ENCODE measurements at regions of chr17 and their contacts with region 1.

Region 1: DNA sequence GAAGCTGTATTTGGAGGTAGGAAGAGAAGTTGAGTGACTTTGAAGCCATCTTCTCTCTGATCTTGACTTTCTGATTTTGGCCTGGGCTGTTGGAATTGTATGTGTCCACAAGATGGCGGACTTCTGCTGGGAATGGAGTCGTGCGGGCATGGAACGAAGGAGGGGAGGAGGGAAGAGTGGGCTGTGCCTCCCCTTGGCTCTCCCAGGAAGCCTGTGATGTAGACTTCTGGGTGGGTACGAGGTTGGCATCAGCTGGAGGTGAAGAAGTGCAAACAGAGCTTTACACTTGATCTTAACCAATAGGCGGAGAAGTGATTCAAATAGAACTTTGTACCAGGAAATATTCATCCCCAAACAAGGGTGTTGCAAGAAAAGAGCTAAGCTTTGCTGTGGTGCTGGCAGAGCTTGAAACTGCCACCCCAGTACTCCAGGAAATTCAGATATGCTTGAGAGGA is 7.4 kb upstream of the TMEM220 start:
- DNase-seq: no peak
- H3K4me3 ChIP-seq: no peak overlapping the region
- H3K27ac ChIP-seq: no peak overlapping the region
- H3K4me1 ChIP-seq: peaks cover 0 to 12% (median 4%) of the 10 kb centered on the region in 4 donors
- H3K27me3 ChIP-seq: no peaks in the 10 kb centered on the region
- CTCF ChIP-seq: peak; percentile 73 to 75 (median 74)
- EP300 ChIP-seq: no peak
- POLR2A ChIP-seq: no peak

Region 2: GRCh38 chr17:10789694-10790271 is 52.6 kb after region 1 on chr17:
- intact Hi-C with region 1: no loop called
- DNase-seq: no peak
- H3K4me3 ChIP-seq: no peak overlapping the region
- H3K27ac ChIP-seq: no peak overlapping the region
- H3K4me1 ChIP-seq: peaks cover 6 to 20% (median 11%) of the 10 kb centered on the region in 4 donors
- H3K27me3 ChIP-seq: no peaks in the 10 kb centered on the region
- CTCF ChIP-seq: no peak
- EP300 ChIP-seq: no peak
- POLR2A ChIP-seq: no peak

Region 3: DNA sequence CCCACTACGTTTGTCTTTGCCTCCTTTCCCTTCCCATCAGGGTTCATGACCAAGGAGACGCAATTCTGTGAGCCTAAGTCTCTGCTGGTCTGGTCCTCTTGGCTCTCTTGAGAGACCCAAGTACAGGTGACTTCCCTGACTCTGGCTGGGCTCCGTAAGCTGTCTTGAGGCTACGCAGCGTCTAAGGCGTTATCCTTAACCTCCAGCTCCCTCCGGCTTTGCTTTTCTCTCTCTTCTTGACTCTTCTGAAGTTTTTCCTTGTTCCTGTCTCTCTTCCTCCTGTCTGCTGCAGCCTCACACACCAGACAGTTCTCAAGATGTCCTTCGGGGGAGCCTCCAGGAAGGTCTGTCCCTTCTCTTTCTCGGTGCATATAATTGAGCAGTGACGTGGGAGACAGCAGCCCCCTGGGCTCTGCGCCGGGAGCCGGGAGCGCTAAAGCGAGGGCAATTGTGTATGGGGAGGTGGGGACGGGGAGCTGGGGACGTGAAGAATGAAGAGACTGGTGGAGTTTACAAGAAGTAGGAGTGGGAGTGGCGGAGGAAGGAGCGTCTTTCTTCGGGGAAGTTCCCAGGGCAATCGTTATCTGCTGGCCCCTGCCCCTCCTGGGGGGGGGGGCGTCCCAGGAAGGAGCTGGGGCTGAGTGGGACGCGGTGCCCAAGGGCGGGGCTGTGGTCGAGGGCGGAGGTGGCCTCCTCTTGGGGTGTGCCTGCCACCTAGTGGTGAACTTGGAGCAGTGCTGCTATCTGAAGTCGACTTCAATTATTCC is 107.6 kb after region 1 on chr17:
- intact Hi-C with region 1: loop called (anchors 1 kb)
- DNase-seq: no peak
- H3K4me3 ChIP-seq: peak overlapping the region; percentile 54 to 65 (median 56)
- H3K27ac ChIP-seq: peak overlapping the region in 1 of 4 donors; percentile 31
- H3K4me1 ChIP-seq: peaks cover 9 to 13% (median 11%) of the 10 kb centered on the region in 4 donors
- H3K27me3 ChIP-seq: no peaks in the 10 kb centered on the region
- CTCF ChIP-seq: peak; percentile 91 to 95 (median 91)
- EP300 ChIP-seq: no peak
- POLR2A ChIP-seq: no peak